ENCODE measurements at regions of chr4 and their contacts with region 1.

Region 1: GRCh38 chr4:99998062-99998867 is 48.2 kb upstream of the H2AZ1 start:
- H3K4me3 ChIP-seq: no peak overlapping the region
- H3K27ac ChIP-seq: no peak overlapping the region
- H3K4me1 ChIP-seq: no peaks in the 10 kb centered on the region
- CTCF ChIP-seq: no peak

Region 2: DNA sequence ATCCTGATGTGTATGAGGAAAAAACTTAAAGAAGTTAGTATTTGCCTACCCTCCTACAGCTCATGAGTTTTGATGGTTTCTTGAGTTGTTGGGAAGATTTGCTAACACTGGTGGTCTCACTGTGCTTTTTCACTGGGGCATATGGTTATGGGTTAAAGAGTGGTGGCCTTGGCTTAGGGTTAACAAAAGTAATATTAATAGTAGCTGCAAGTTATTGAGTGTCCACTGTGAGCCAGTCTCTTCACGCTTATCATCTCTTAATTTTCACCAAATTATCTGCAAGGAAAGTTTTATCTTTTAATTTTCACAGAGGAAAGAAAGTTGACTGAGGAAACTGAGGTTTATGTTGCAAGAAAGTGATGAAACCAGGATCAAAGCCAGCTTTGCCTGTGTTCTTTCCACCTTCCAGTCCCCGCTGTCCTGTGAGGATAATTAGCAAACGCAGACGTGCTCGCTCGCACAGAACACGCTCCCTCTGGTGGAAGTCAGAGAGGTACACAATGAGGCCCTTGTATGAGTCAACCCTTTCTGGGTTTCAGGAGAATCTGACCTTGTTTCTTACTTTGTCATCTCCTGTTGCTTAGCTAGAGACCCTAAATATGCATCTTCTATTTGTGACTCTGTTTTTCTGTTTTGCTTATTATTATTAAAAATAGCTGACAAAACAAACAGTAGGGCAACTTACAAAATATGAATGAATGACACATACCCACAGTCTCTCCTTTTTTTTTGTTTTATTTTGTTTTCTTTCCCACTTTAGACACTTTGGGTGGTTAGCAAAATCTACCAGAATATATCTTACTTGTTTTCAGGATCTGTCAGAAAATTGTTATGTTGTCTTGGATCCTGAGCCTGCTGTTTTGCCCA is 97.7 kb after region 1 on chr4:
- CTCF ChIA-PET with region 1: interaction called, 15 read pairs
- POLR2A ChIA-PET with region 1: no interaction called
- H3K4me3 ChIP-seq: no peak overlapping the region
- H3K27ac ChIP-seq: no peak overlapping the region
- H3K4me1 ChIP-seq: no peaks in the 10 kb centered on the region
- CTCF ChIP-seq: peak; percentile 24; the same call in 1 of the 2 replicates